ENCODE measurements at regions of chr12 and their contacts with region 1.

Region 1: GRCh38 chr12:81274637-81275529 is 197.0 kb downstream of the ACSS3 start:
- DNase-seq: no peak
- ATAC-seq: no peak

Region 2: GRCh38 chr12:80794551-80794950 is 480.3 kb before region 1 on chr12:
- intact Hi-C with region 1: no loop called
- DNase-seq: no peak
- ATAC-seq: no peak

Region 3: DNA sequence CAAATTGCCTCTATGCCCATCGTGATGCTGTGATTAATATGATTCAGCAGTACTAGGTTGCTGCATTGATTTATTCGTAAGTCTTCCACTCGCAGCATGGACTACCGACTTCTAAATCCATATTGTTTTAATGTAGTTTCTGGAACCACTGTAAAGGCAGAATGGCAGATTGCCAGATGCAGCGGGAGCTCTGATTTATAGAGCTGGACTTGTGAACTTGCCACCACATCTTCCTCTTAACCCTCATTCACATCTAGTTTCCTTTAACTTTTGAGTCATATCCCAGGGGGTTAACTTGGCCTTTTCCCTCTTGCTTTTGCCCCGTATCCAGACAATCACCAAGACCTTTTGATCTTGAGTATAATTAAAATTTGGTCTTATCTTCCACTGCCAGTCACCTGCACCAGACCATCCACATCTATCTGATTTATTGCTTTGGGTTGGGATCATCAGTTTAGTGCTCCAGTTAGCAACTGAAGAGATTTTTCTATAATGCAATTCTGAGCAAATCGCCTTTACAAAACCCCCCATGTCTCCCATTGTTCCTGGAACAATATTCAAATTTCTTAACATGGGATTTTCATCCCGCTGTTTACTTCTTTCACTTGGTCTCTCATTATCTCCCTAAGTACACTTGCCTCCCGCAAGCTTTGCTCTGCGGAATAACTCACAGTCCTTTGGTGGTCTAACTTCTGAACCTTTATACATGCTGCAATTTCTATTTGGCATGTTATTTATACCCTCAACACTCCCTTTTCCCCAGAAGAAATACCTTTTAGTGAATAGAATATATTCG is 66.5 kb before region 1 on chr12:
- intact Hi-C with region 1: no loop called
- DNase-seq: no peak
- ATAC-seq: no peak

Region 4: DNA sequence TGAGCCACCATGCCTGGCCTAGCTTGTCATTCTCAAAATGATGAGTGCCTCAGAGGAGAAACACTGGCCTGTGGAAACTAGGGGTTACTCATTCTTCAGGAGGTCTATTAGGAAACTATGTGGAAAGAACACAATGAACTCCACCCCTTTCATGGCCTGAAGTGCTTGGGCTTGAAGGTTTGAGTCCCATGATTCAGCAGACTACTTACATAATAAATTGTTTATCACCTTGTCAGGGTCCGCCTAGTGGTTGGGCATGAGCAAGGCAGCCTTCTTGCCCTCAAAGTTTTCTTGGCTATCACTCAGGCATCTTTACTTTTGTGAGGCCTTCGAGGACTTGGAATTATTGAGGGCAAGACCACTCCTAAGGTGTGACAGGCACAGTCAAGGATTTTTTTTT is 54.2 kb after region 1 on chr12:
- intact Hi-C with region 1: loop called (anchors 5 kb)
- DNase-seq: no peak
- ATAC-seq: no peak

Measured in Right ventricle myocardium superior (tissue), 1 donor.